Activated CD4-positive, alpha-beta memory T cell treated with anti-CD3 and anti-CD28 coated beads, Interleukin-2, amount 10 ng/mL, durations not matched to agents 7 days and 5 days (primary cell): ENCODE measurements at regions of chr11 and their contacts with region 1.

Region 1: DNA sequence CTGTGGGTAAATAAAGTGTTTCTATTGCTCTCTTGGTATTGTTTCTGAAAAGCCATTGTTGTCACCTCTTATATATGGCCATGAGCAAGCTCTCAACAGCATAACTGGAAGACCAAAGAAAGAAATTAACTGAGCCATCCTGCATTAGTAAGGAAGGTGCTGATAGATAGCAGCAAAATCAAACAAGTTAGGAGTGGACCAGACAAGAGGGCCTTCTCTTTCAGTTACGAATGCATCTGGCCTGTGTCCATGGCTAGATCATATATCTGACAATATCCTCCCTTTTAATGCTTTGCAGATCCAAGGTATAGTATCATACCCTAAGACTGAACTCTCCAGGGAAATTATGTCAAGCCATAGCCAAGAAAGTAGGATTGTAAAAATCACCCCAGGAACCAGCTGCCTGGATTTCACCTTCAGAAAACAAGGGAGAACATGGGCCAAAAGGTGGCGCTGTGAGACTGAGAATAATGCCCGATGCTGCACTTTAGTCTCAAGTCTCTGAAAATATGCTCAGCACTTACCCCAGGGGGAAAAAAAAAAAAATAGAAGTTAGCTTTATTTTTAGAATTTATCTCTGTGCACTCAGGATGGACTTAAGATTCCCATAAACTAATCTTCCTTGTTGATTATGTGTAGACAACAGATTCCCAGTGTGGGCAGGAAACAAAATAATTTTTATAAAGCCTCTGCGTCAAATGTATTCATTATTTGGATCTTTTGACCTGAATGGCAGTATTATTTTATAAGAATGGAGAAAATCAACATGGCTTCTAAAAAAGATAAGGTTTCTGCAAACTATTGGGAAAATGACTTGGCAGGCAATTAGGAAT is 415.1 kb downstream of the ETS1 start:
- DNase-seq: peak; percentile 87
- H3K4me3 Mint-ChIP-seq: no peak overlapping the region
- H3K27ac Mint-ChIP-seq: no peak overlapping the region
- H3K4me1 Mint-ChIP-seq: peaks cover 13% of the 10 kb centered on the region
- H3K27me3 Mint-ChIP-seq: peaks cover 7% of the 10 kb centered on the region

Region 2: GRCh38 chr11:128039140-128040021 is 132.9 kb before region 1 on chr11:
- CTCF ChIA-PET with region 1: interaction called, 10 read pairs
- POLR2A ChIA-PET with region 1: interaction called, 5 read pairs
- DNase-seq: peak; percentile 89
- H3K4me3 Mint-ChIP-seq: peak overlapping the region; percentile 64
- H3K27ac Mint-ChIP-seq: peak overlapping the region; percentile 98
- H3K4me1 Mint-ChIP-seq: peaks cover 48% of the 10 kb centered on the region
- H3K27me3 Mint-ChIP-seq: no peaks in the 10 kb centered on the region

Region 3: GRCh38 chr11:128105950-128106349 is 66.3 kb before region 1 on chr11:
- CTCF ChIA-PET with region 1: no interaction called
- POLR2A ChIA-PET with region 1: no interaction called
- DNase-seq: no peak
- H3K4me3 Mint-ChIP-seq: no peak overlapping the region
- H3K27ac Mint-ChIP-seq: no peak overlapping the region
- H3K4me1 Mint-ChIP-seq: peaks cover 10% of the 10 kb centered on the region
- H3K27me3 Mint-ChIP-seq: peaks cover 7% of the 10 kb centered on the region

Region 4: DNA sequence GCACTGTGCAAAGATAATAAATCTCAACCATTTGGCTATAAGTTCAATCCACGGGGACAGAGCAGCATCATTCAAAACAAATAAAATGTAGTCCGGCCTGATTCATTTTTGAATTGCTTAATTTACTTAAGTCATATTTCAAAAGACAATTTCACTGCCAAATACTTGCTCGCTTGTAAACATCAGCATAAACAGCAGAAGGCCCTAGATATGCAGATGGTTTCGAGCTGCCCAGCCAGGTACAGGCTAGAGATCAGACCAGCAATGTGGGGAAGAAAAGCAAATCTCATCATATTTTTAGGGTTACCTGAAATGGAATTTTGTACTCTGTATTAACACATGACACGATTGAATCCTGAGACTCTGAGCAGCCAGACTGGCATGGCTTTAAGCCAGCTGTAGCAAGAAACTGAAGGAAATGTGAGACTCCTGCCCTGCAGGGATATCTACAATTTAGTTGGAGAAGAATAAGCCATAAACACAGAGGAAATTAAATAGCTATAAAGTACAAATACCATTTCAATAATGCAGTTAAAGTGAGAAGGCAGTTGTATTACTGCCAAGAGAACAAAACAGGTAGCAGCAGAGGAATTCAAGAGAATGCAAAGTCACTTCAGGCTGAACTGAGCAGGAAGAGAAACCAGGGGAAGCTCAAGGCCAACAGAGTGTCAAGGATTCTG is 25.2 kb before region 1 on chr11:
- CTCF ChIA-PET with region 1: no interaction called
- POLR2A ChIA-PET with region 1: no interaction called
- DNase-seq: no peak
- H3K4me3 Mint-ChIP-seq: no peak overlapping the region
- H3K27ac Mint-ChIP-seq: no peak overlapping the region
- H3K4me1 Mint-ChIP-seq: no peaks in the 10 kb centered on the region
- H3K27me3 Mint-ChIP-seq: peaks cover 3% of the 10 kb centered on the region

Region 5: GRCh38 chr11:128182844-128183243 is 10.6 kb after region 1 on chr11:
- CTCF ChIA-PET with region 1: interaction called, 10 read pairs
- POLR2A ChIA-PET with region 1: no interaction called
- DNase-seq: no peak
- H3K4me3 Mint-ChIP-seq: no peak overlapping the region
- H3K27ac Mint-ChIP-seq: no peak overlapping the region
- H3K4me1 Mint-ChIP-seq: peaks cover 14% of the 10 kb centered on the region
- H3K27me3 Mint-ChIP-seq: no peaks in the 10 kb centered on the region

Region 6: DNA sequence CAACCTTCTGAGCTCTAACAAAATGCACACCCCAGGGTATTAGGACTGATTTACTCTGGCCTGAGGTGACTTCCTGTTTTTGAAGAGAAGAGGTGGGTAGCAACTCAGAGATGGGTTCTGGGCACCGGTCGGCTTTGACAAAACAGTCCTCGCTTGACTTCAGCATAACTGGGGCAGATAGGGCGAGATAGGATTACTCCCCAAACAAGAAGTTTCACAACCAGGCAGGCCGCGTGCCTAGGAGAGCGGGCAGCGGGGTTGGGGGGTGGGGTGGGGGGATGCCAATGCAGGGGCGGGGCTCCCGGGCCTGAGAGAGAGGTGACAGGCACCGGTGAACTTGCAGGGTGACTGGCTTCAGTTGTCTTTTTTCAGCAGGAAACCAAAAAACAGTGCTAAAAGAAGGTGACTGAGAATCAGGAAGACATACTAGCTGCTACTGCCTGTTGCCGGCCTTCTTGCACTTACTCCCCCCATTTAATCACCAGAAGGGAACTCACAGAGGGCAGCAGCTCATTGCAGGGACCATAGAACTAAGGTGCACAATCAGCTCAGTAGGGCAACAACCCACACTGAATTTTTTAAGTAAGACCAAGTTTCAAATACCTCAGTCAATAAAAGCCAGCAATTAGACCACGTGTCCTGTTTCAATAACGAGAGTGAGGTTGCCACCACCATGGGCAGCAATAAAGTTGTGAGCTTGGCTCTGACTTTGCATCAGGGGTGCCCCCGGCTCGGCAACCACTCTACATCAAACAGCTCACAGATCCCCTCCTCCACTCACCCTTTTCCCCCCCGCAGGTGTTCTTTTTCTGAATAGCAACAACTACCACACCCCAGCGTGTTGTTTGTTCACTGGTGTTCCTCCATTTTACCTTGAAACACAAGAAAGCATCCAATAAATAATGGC is 452.3 kb after region 1 on chr11:
- CTCF ChIA-PET with region 1: interaction called, 205 read pairs
- POLR2A ChIA-PET with region 1: interaction called, 3 read pairs
- DNase-seq: peak; percentile 75
- H3K4me3 Mint-ChIP-seq: peak overlapping the region; percentile 55
- H3K27ac Mint-ChIP-seq: peak overlapping the region; percentile 93
- H3K4me1 Mint-ChIP-seq: peaks cover 84% of the 10 kb centered on the region
- H3K27me3 Mint-ChIP-seq: no peaks in the 10 kb centered on the region

Region 7: GRCh38 chr11:128757235-128757711 is 585.0 kb after region 1 on chr11:
- CTCF ChIA-PET with region 1: interaction called, 11 read pairs
- POLR2A ChIA-PET with region 1: interaction called, 5 read pairs
- DNase-seq: peak; percentile 77
- H3K4me3 Mint-ChIP-seq: peak overlapping the region; percentile 24
- H3K27ac Mint-ChIP-seq: peak overlapping the region; percentile 87
- H3K4me1 Mint-ChIP-seq: peaks cover 75% of the 10 kb centered on the region
- H3K27me3 Mint-ChIP-seq: no peaks in the 10 kb centered on the region

Region 8: GRCh38 chr11:128848815-128849455 is 676.7 kb after region 1 on chr11:
- CTCF ChIA-PET with region 1: interaction called, 10 read pairs
- POLR2A ChIA-PET with region 1: no interaction called
- DNase-seq: peak; percentile 69
- H3K4me3 Mint-ChIP-seq: no peak overlapping the region
- H3K27ac Mint-ChIP-seq: no peak overlapping the region
- H3K4me1 Mint-ChIP-seq: peaks cover 28% of the 10 kb centered on the region
- H3K27me3 Mint-ChIP-seq: no peaks in the 10 kb centered on the region

Region 9: GRCh38 chr11:128859563-128860441 is 687.5 kb after region 1 on chr11:
- CTCF ChIA-PET with region 1: interaction called, 24 read pairs
- POLR2A ChIA-PET with region 1: no interaction called
- DNase-seq: peak; percentile 82
- H3K4me3 Mint-ChIP-seq: no peak overlapping the region
- H3K27ac Mint-ChIP-seq: no peak overlapping the region
- H3K4me1 Mint-ChIP-seq: peaks cover 8% of the 10 kb centered on the region
- H3K27me3 Mint-ChIP-seq: peaks cover 7% of the 10 kb centered on the region